Posterior vena cava (tissue), 2 donors: ENCODE measurements at regions of chr4 and their contacts with region 1.

Region 1: GRCh38 chr4:30863021-30863420 is 142.9 kb downstream of the PCDH7 start:
- DNase-seq: no peak

Region 2: GRCh38 chr4:30719460-30720020 is 143.5 kb before region 1 on chr4:
- intact Hi-C with region 1: loop called in 1 of 2 experiments (anchors 10 kb)
- DNase-seq: peak; percentile 85

Region 3: DNA sequence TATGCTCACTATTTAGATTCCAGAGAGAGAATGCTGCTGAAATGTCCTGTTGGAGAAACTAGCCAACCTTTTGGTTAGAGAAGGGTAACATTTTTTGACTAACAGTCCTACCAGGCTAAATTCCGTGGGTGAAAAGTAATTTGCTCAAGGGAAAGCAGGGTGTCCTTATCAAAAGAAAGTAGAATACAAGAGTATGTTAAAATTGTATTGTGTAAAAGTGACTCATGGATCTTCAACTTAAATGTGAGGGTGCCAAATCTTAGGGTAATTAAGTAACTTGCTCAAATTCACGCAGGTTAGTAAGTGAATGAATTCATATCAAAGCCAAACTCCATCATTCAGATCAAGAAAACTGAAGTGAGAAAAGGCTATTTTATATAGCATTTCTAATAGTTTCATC is 61.1 kb before region 1 on chr4:
- intact Hi-C with region 1: no loop called
- DNase-seq: no peak

Region 4: GRCh38 chr4:30903502-30904217 is 40.6 kb after region 1 on chr4:
- intact Hi-C with region 1: no loop called
- DNase-seq: no peak